ENCODE measurements at regions of chr18 and their contacts with region 1.

Region 1: GRCh38 chr18:80154293-80154692 is 45.2 kb downstream of the ADNP2 start:
- DNase-seq: peak in 3 of 42 donors; percentile 23 to 55 (median 33)

Region 2: GRCh38 chr18:80109676-80110078 is 44.6 kb before region 1 on chr18:
- intact Hi-C with region 1: loop called (anchors 5 kb)
- DNase-seq: peak in 40 of 42 donors; percentile 24 to 85 (median 57)

Region 3: GRCh38 chr18:80247403-80247916 is 93.2 kb after region 1 on chr18 and contains the start of gene PARD6G:
- intact Hi-C with region 1: no loop called
- DNase-seq: peak; percentile 68 to 96 (median 92)

Measured in head of caudate nucleus (tissue), 42 donors.